Tibial artery (tissue), 4 donors: ENCODE measurements at regions of chr4 and their contacts with region 1.

Region 1: GRCh38 chr4:47122592-47123291 is 91.4 kb downstream of the GABRB1 start:
- DNase-seq: peak; percentile 39 to 59
- H3K4me3 ChIP-seq: no peak overlapping the region
- H3K27ac ChIP-seq: no peak overlapping the region
- H3K4me1 ChIP-seq: peaks cover 0 to 5% (median 0%) of the 10 kb centered on the region in 4 donors
- H3K27me3 ChIP-seq: no peaks in the 10 kb centered on the region
- CTCF ChIP-seq: peak; percentile 58 to 75

Region 2: DNA sequence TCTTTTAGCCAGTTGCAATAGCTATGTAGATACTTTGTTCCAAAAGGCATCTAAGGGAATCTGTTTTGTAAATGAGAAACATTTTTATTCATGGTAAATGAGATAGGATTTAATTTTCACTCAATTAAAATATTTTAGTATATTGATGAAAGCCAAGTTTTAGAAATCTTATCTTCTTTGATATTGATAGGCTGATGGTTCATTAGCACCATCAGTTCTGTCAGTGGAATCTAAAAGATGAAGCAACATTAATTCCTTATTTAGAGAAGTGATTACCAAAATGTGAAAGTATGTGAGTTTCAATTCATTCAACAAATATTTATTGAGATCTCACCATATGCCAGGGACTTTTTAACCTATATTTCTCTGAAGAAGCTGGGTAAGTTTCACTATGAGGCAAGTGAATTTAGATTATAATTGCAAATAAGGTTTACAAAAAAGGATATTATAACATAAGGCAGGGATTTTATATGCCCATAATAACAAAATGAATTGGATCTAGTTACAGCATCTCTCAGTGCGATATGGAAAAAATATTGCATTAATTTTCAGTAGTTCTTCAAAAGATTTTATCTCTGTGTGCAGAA is 12.1 kb before region 1 on chr4:
- intact Hi-C with region 1: loop called (anchors 2 kb)
- DNase-seq: no peak
- H3K4me3 ChIP-seq: no peak overlapping the region
- H3K27ac ChIP-seq: no peak overlapping the region
- H3K4me1 ChIP-seq: no peaks in the 10 kb centered on the region
- H3K27me3 ChIP-seq: no peaks in the 10 kb centered on the region
- CTCF ChIP-seq: no peak